ENCODE measurements at regions of chr10 and their contacts with region 1.

Region 1: GRCh38 chr10:62038609-62039190 is 137.2 kb downstream of the ARID5B start:
- DNase-seq: peak; percentile 62
- H3K4me3 ChIP-seq: peak overlapping the region; percentile 17 to 43; a peak in 2 of 4 replicates
- H3K27ac ChIP-seq: peak overlapping the region; percentile 75 to 84
- H3K4me1 ChIP-seq: peaks cover 39 to 67% of the 10 kb centered on the region in 2 experiments
- H3K27me3 ChIP-seq: no peaks in the 10 kb centered on the region
- CTCF ChIP-seq: peak; percentile 95
- EP300 ChIP-seq: peak; percentile 56 to 92; a peak in 3 of 4 replicates
- RAD21 ChIP-seq: peak; percentile 96

Region 2: DNA sequence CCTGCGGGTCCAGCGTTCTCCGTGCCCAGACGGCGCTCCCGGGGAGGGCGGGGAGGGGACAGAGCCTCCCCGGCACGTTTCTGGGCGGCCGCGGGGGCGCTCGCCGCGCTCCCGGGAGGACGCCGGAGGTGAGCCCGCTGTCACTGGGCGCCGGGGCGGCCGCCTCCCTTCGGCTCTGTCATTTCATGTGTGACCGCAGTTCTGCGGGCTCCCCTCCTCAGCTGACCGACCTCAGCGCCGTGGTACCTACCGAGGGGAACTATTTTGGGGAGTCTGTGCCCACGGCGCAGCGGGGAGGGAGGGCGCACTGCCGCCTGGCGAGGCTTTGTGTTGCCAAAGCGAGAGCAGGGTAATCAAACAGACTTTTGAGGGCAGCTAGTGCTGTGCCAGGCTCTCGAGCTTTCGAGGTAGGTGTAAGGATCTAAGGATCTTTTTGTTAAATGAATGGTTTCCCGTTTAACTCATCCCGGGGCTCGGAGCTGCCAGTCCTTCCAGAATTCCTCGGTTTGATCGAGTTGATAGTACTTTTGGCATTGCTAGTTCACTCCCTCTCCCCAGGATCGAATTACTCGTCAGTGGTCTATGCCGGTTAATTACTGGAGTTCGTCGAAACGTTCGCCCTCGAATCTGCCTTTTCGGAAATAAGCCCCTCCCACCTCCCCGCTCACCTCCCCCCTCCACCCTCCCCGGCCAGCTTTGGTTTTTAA is 135.3 kb before region 1 on chr10:
- CTCF ChIA-PET with region 1: interaction called, 35 read pairs
- POLR2A ChIA-PET with region 1: no interaction called
- DNase-seq: peak; percentile 78
- H3K4me3 ChIP-seq: peak overlapping the region; percentile 67 to 84
- H3K27ac ChIP-seq: peak overlapping the region; percentile 87 to 95
- H3K4me1 ChIP-seq: peaks cover 15 to 22% of the 10 kb centered on the region in 2 experiments; a peak in 3 of 4 replicates
- H3K27me3 ChIP-seq: no peaks in the 10 kb centered on the region
- CTCF ChIP-seq: peak; percentile 43
- EP300 ChIP-seq: no peak
- RAD21 ChIP-seq: no peak; the same call in 1 of the 2 replicates

Region 3: GRCh38 chr10:62025901-62026879 is 12.5 kb before region 1 on chr10:
- CTCF ChIA-PET with region 1: interaction called, 17 read pairs
- POLR2A ChIA-PET with region 1: no interaction called
- DNase-seq: no peak
- H3K4me3 ChIP-seq: no peak overlapping the region
- H3K27ac ChIP-seq: peak overlapping the region; percentile 22 to 81; a peak in 3 of 4 replicates
- H3K4me1 ChIP-seq: peaks cover 0 to 37% of the 10 kb centered on the region in 2 experiments; a peak in 3 of 4 replicates
- H3K27me3 ChIP-seq: no peaks in the 10 kb centered on the region
- CTCF ChIP-seq: no peak
- EP300 ChIP-seq: peak in 1 of 2 experiments; percentile 75; a peak in 2 of 4 replicates
- RAD21 ChIP-seq: no peak

Region 4: DNA sequence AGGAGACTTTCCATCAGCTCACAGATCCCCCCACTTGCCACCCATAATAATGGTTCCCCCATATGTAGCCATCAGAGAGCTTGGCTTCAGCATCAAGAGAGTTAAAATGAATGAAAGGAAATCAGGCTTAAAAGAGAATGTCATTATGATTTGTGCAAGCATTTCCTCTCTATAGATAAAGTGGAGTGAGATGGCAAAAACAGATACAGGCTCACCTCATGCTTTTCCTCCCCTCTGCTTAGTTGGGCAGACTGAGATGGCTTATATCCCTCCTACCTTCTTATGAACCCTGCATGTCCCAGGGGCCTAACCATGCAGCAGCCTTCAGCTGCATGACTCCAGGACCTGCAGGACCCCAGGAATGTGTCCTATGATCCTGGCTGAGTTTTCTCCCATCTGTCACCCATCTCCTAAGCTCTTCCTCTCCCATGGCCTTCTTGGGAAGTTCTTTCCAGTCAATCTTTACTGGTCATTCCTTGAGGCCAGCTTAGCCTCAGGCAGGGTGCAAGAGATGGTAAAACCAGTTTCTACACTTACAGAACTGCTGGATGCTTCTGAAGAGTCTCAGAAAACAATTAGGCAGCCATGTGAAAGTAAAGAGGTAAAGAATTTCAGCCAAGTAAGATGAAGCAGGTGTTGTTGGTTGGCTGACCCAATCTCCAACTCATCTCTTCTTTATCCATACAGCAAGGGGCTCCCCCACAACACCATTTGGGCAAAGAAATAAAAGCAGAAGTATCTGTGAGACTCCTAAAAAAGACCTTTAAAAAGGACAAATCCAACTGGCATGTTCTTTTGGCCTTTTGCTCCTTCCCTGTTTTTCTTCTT is 70.3 kb after region 1 on chr10:
- CTCF ChIA-PET with region 1: interaction called, 13 read pairs
- POLR2A ChIA-PET with region 1: no interaction called
- DNase-seq: no peak
- H3K4me3 ChIP-seq: no peak overlapping the region
- H3K27ac ChIP-seq: no peak overlapping the region
- H3K4me1 ChIP-seq: peaks cover 0 to 8% of the 10 kb centered on the region in 2 experiments; a peak in 1 of 4 replicates
- H3K27me3 ChIP-seq: no peaks in the 10 kb centered on the region
- CTCF ChIP-seq: no peak
- EP300 ChIP-seq: no peak
- RAD21 ChIP-seq: no peak

Region 5: GRCh38 chr10:62264702-62265436 is 226.2 kb after region 1 on chr10:
- CTCF ChIA-PET with region 1: interaction called, 17 read pairs
- POLR2A ChIA-PET with region 1: no interaction called
- DNase-seq: peak; percentile 65
- H3K4me3 ChIP-seq: no peak overlapping the region
- H3K27ac ChIP-seq: peak overlapping the region; percentile 19 to 58; a peak in 3 of 4 replicates
- H3K4me1 ChIP-seq: peaks cover 16 to 36% of the 10 kb centered on the region in 2 experiments; a peak in 3 of 4 replicates
- H3K27me3 ChIP-seq: no peaks in the 10 kb centered on the region
- CTCF ChIP-seq: peak; percentile 77
- EP300 ChIP-seq: no peak
- RAD21 ChIP-seq: peak; percentile 67

Measured in SK-N-SH (cell line).